Activated CD4-positive, alpha-beta T cell treated with anti-CD3 and anti-CD28 coated beads, Interleukin-2, amount 10 ng/mL, durations not matched to agents 24 days and 14 days (primary cell): ENCODE measurements at regions of chr11 and their contacts with region 1.

Region 1: DNA sequence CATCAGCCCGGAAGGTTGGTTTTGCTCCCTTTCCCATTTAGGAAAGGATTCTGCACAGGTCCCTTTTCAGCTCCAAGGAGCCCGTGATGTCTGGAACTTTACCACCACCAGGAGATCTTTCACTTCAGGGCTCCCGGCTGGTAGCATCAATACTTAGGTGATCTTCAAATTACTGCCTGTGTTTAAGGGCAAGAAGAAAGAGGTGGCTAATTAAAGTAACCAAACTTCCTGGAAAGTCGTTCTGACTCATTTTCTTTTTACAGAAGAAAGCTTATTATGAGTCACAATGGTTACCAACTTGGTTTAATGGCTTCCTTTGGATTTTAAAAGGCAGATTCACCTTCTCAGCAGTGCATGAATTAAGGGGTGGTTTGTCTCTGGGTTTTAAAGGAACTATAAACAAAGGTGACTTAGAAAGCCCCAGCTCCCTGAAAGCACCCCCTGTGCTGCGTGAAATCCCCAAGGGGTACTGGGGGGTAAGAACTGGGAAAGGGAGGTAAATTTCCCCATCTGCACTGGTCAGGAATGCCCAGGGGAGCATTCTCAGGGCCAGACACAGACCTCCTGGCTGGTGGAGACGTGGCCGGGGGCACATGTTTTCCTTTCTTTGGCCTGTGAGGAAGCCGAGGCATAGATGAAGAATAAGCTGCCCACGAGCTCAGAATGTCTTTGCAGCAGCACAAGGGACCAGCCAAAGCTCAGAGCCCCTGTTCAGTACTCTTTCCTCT is 8.8 kb downstream of the POU2F3 start:
- DNase-seq: peak; percentile 75
- H3K4me3 Mint-ChIP-seq: peak overlapping the region; percentile 72
- H3K27ac Mint-ChIP-seq: peak overlapping the region; percentile 71
- H3K4me1 Mint-ChIP-seq: peaks cover 49% of the 10 kb centered on the region
- H3K27me3 Mint-ChIP-seq: peaks cover 60% of the 10 kb centered on the region

Region 2: DNA sequence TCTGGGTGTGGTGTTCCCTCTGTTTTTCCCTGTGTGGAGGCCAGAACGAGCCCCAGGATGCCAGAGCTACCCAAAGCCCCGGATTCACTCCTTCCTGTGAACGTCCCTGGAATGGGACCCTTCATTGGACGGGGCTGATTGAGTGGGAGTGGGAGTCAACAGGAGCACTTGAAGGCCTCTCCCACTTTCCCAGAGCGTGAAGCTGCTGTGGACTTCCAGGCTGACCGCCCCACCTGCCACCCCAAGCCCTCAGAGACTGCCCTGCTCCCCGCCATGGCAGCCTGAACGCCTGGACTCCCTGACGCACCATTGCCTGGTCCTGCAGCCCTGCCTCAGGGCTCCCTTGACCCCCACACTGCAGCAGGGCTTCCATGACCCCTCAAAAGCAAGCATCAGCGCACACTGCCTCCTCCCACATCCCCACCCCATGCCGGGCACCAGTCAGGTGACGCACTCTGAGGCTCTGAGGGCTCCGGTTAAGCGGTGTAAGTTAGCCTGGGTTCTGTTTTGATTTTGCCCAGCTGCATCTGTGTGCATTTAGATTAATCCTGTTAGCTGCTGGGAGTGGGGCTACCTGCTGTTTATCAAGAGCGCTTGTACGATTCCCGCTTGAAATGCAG is 150.2 kb before region 1 on chr11:
- intact Hi-C with region 1: no loop called
- DNase-seq: no peak
- H3K4me3 Mint-ChIP-seq: no peak overlapping the region
- H3K27ac Mint-ChIP-seq: no peak overlapping the region
- H3K4me1 Mint-ChIP-seq: no peaks in the 10 kb centered on the region
- H3K27me3 Mint-ChIP-seq: peaks cover 2% of the 10 kb centered on the region

Region 3: GRCh38 chr11:120295084-120295483 is 46.4 kb after region 1 on chr11:
- intact Hi-C with region 1: no loop called
- DNase-seq: no peak
- H3K4me3 Mint-ChIP-seq: no peak overlapping the region
- H3K27ac Mint-ChIP-seq: no peak overlapping the region
- H3K4me1 Mint-ChIP-seq: no peaks in the 10 kb centered on the region
- H3K27me3 Mint-ChIP-seq: peaks cover 59% of the 10 kb centered on the region

Region 4: GRCh38 chr11:120344302-120345004 is 95.7 kb after region 1 on chr11:
- intact Hi-C with region 1: loop called (anchors 5 kb)
- DNase-seq: peak; percentile 92
- H3K4me3 Mint-ChIP-seq: peak overlapping the region; percentile 61
- H3K27ac Mint-ChIP-seq: peak overlapping the region; percentile 38
- H3K4me1 Mint-ChIP-seq: peaks cover 25% of the 10 kb centered on the region
- H3K27me3 Mint-ChIP-seq: peaks cover 64% of the 10 kb centered on the region